Heart right ventricle (tissue), 16 donors: ENCODE measurements at regions of chr1 and their contacts with region 1.

Region 1: DNA sequence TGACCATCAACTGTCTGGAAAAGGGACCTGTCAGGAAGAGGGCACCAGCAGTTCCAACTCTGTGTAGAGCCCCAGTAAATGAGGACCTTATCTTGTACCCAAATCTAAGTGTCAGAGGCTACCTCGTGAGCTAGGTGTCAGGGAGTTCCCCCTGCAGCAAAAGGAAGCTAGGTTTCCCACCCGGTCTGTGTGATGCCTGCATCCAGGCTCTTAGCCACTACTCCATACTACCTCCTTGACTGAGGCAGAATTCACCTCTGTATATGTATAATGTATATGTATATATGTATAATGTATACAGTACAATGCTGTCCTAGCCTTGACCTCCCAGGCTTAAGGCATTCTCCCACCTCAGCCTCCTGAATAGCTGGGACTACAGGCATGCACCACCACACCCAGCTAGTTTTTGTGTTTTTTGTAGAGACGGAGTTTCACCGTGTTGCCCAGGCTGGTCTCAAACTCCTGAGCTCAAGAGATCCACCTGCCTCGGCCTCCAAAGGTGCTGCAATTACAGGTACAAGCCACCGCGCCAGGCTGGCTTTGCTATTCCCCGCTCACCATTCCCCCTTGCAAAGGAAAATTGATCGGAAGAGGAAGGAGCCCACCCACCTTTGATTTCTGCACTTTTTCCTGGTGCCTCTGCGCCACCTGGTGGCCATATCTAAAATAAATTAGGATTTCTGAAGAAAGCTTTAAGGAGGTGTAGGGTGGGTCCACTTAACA is 15.7 kb upstream of the LUZP1 start:
- DNase-seq: peak; percentile 15 to 46
- ATAC-seq: peak in 6 of 8 donors; percentile 38 to 74 (median 58)
- H3K4me3 ChIP-seq: peak overlapping the region in 8 of 10 donors; percentile 26 to 55 (median 39)
- H3K27ac ChIP-seq: no peak overlapping the region
- H3K4me1 ChIP-seq: peaks cover 0 to 10% (median 6%) of the 10 kb centered on the region in 9 donors
- H3K27me3 ChIP-seq: no peaks in the 10 kb centered on the region
- CTCF ChIP-seq: peak; percentile 76 to 93 (median 83)

Region 2: GRCh38 chr1:22976461-22977243 is 207.7 kb before region 1 on chr1:
- intact Hi-C with region 1: loop called (anchors 2 to 10 kb)
- DNase-seq: peak; percentile 21 to 50
- ATAC-seq: peak; percentile 89 to 95 (median 92)
- H3K4me3 ChIP-seq: no peak overlapping the region
- H3K27ac ChIP-seq: no peak overlapping the region
- H3K4me1 ChIP-seq: peaks cover 0 to 10% (median 0%) of the 10 kb centered on the region in 9 donors
- H3K27me3 ChIP-seq: peaks cover 0 to 36% (median 7%) of the 10 kb centered on the region in 7 donors
- CTCF ChIP-seq: peak; percentile 30 to 70 (median 65)

Region 3: DNA sequence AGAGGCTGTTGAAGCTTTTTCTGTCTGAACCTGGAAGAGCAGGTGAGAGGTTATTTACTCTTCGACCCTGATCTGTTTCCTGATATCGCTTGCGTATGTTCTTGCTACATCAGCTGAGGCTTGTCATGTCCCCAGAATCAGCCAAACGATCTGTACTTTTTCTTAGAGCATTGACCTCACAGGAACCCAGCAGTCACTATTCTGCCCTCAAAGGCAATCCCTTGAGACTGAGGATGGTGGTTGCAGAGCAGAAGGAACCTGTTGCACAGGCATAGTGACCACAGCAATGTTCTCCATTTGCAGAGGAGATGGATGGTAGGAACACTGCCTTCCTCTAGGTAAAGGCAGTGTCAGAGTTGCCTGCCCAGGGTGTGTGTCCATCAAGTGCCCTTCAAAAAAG is 200.4 kb before region 1 on chr1:
- intact Hi-C with region 1: loop called in 9 of 10 experiments (anchors 2 to 10 kb)
- DNase-seq: no peak
- ATAC-seq: no peak
- H3K4me3 ChIP-seq: no peak overlapping the region
- H3K27ac ChIP-seq: no peak overlapping the region
- H3K4me1 ChIP-seq: no peaks in the 10 kb centered on the region
- H3K27me3 ChIP-seq: peaks cover 0 to 3% (median 0%) of the 10 kb centered on the region in 7 donors
- CTCF ChIP-seq: no peak

Region 4: DNA sequence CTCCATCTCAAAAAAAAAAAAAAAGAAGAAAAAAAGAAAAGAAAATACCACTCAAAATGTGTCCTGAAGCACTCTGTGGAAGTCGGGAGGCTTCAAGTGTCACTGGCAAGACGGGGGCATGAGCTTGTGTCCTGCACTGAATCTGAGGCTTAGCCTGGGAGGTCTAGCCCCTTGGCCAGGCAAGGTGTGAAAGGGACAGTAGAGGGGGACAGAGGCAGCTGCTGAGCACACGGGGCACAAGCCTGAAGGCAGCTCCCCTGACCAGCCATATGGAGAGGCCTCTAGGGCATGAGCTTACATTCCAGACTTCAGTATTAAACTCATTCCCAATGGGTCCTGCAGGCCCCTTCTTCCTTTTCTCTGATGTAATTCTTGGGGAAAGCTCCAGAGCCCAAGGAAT is 323.1 kb after region 1 on chr1:
- intact Hi-C with region 1: no loop called
- DNase-seq: no peak
- ATAC-seq: no peak
- H3K4me3 ChIP-seq: no peak overlapping the region
- H3K27ac ChIP-seq: no peak overlapping the region
- H3K4me1 ChIP-seq: no peaks in the 10 kb centered on the region
- H3K27me3 ChIP-seq: no peaks in the 10 kb centered on the region
- CTCF ChIP-seq: no peak